OCI-LY7 (cell line): ENCODE measurements at regions of chr9 and their contacts with region 1.

Region 1: GRCh38 chr9:9820436-9820835 is 792.4 kb downstream of the PTPRD start:
- DNase-seq: no peak
- H3K4me3 ChIP-seq: no peak overlapping the region
- H3K27ac ChIP-seq: no peak overlapping the region
- H3K4me1 ChIP-seq: no peaks in the 10 kb centered on the region
- CTCF ChIP-seq: no peak

Region 2: DNA sequence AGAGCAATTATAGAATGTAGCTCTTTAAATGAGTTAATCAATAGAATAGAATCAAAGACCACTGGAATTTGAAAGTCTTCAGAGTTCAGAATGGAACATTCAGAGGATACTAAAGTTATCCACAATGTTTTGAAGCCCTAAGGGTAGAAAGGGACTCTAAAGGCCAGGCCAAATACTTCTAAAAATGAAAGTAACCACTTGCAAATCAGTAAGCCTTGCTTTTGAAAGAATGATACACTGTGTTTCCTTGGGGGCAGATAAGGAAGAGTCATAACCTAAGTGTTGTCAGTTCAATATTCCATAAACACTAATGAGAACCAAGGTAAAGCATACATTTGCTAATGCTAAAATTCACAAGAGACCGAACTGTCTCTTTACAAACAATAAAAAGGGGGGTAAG is 21.1 kb before region 1 on chr9:
- CTCF ChIA-PET with region 1: no interaction called
- POLR2A ChIA-PET with region 1: interaction called, 5 read pairs
- intact Hi-C with region 1: loop called (anchors 2 kb)
- DNase-seq: no peak
- H3K4me3 ChIP-seq: no peak overlapping the region
- H3K27ac ChIP-seq: no peak overlapping the region
- H3K4me1 ChIP-seq: no peaks in the 10 kb centered on the region
- CTCF ChIP-seq: no peak